HAP-1 (cell line): ENCODE measurements at regions of chr16 and their contacts with region 1.

Region 1: DNA sequence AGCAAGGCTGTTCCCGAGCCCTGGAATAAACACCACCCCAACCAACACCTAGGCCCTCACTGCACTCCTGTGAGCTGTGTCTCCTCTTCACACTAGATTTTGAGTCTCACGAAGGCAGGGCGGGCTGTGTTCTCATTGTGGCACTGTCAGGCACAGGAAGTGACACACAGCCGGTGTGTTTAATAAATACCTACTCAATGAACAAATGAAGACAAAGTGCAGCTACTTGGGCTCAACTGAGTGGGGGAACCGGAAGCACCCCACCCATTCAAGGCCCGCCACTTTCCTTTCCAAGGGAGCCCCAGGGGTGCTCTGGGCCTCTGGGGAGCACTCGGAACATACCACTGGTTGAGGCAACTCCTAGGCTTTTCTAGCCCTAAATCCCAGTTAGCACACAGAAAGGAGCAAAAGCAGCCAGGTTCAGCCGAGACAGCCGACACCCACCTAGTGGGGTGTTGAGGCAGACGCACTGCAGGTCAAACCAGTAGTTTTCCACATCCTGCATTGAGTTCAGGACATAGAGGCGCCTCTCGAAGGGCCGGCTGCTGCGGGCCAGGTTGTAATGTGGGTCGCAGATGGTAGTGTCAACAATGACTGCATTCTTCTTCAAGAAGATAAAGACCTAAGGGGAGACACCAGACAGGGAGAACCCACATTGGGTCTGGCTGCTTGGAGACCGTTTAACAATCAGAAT is 57.7 kb downstream of the GTF3C1 start:
- DNase-seq: no peak
- H3K4me3 ChIP-seq: no peak overlapping the region
- H3K4me1 ChIP-seq: no peaks in the 10 kb centered on the region
- H3K27me3 ChIP-seq: no peaks in the 10 kb centered on the region

Region 2: DNA sequence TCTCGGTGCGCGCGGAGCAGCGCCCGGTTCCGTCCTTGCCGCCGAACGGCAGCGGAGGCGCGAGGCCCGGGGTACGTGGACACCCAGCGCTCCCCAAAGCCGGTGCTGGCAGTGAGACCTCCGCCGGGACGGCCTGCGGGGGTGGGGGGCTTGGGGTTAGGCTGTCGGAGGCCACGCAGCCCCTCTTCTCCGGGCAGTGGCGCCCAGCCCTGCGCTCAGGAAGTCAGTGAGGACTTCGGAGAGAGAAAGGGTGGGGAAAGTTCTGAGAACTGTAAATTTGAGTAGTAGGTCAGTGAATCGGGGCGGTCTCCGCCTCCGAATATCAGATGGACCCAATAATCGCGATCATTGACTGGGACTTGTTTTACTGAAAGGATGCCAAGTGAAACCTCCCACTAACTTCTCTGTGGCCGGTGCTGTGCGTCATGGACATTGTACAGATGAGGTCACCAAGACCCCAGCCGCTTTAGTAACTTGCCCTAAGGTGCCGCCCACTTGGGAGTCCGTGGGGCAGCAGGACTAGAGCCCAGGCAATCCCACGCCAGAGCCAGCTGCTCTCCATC is 177.8 kb before region 1 on chr16:
- in situ Hi-C with region 1: no loop called
- DNase-seq: peak in 1 of 2 experiments; percentile 31
- H3K4me3 ChIP-seq: peak overlapping the region; percentile 55
- H3K4me1 ChIP-seq: peaks cover 3% of the 10 kb centered on the region; the same call in 1 of the 2 replicates
- H3K27me3 ChIP-seq: no peaks in the 10 kb centered on the region

Region 3: GRCh38 chr16:27529962-27530361 is 37.9 kb after region 1 on chr16:
- in situ Hi-C with region 1: loop called (anchors 5 kb)
- DNase-seq: no peak
- H3K4me3 ChIP-seq: no peak overlapping the region
- H3K4me1 ChIP-seq: no peaks in the 10 kb centered on the region
- H3K27me3 ChIP-seq: no peaks in the 10 kb centered on the region